ENCODE measurements at regions of chr19 and their contacts with region 1.

Region 1: GRCh38 chr19:50368649-50369570 is 3.5 kb upstream of the NAPSA start:
- DNase-seq: peak; percentile 88
- H3K4me3 ChIP-seq: peak overlapping the region; percentile 24 to 66 (median 52)
- H3K27ac ChIP-seq: peak overlapping the region; percentile 79 to 89 (median 86)
- H3K4me1 ChIP-seq: peaks cover 0 to 4% (median 2%) of the 10 kb centered on the region in 4 donors
- H3K27me3 ChIP-seq: no peaks in the 10 kb centered on the region
- CTCF ChIP-seq: peak; percentile 81 to 96 (median 92)
- EP300 ChIP-seq: no peak
- POLR2A ChIP-seq: no peak

Region 2: GRCh38 chr19:50258918-50259372 is 110.0 kb before region 1 on chr19:
- in situ Hi-C with region 1: no loop called
- intact Hi-C with region 1: no loop called
- DNase-seq: peak; percentile 24
- H3K4me3 ChIP-seq: no peak overlapping the region
- H3K27ac ChIP-seq: no peak overlapping the region
- H3K4me1 ChIP-seq: no peaks in the 10 kb centered on the region
- H3K27me3 ChIP-seq: no peaks in the 10 kb centered on the region
- CTCF ChIP-seq: peak; percentile 17 to 46 (median 40)
- EP300 ChIP-seq: no peak
- POLR2A ChIP-seq: no peak

Region 3: DNA sequence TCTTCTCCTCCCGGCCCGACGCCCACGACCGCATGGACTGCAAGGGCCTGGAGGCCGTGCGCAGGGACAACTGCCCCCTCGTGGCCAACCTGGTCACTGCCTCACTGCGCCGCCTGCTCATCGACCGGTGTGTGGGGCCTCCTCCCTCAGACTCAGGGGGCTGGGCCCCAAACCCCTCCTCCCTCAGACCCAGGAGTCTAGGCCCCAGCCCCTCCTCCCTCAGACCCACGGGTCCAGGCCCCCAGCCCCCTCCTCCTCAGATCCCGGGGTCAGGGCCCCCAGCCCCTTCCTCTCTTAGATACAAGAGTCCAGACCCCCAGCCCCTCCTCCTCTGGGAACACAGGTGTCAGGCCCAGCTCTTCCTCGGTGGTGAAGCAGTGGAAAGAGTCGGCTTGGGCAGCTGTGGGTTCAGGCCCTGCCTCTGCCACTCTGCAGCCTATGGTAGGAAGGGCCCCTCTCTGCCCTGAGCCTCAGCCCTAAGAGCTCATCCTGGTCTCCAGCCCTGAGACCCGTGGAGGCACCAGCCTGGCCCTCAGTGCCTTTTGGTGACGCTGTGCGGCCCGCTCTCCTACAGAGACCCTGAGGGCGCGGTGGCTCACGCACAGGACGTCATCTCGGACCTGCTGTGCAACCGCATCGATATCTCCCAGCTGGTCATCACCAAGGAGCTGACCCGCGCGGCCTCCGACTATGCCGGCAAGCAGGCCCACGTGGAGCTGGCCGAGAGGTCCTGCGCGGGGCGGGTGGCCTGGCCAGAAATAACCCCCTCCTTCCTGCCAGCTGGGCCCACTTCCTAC is 46.2 kb after region 1 on chr19:
- in situ Hi-C with region 1: loop called in 1 of 4 experiments (anchors 10 kb)
- intact Hi-C with region 1: loop called (anchors 2 kb)
- DNase-seq: peak; percentile 83
- H3K4me3 ChIP-seq: no peak overlapping the region
- H3K27ac ChIP-seq: peak overlapping the region in 3 of 4 donors; percentile 17 to 57 (median 48)
- H3K4me1 ChIP-seq: peaks cover 3 to 51% (median 26%) of the 10 kb centered on the region in 4 donors
- H3K27me3 ChIP-seq: peaks cover 34% of the 10 kb centered on the region
- CTCF ChIP-seq: peak; percentile 83 to 94 (median 91)
- EP300 ChIP-seq: no peak
- POLR2A ChIP-seq: no peak

Region 4: DNA sequence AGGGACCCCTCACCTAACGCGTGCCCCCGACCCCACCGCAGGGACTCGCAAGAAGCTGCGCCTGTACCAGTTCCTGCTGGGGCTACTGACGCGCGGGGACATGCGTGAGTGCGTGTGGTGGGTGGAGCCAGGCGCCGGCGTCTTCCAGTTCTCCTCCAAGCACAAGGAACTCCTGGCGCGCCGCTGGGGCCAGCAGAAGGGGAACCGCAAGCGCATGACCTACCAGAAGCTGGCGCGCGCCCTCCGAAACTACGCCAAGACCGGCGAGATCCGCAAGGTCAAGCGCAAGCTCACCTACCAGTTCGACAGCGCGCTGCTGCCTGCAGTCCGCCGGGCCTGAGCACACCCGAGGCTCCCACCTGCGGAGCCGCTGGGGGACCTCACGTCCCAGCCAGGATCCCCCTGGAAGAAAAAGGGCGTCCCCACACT is 59.1 kb after region 1 on chr19:
- in situ Hi-C with region 1: loop called in 1 of 4 experiments (anchors 10 kb)
- intact Hi-C with region 1: no loop called
- DNase-seq: peak; percentile 81
- H3K4me3 ChIP-seq: peak overlapping the region in 3 of 4 donors; percentile 5 to 33 (median 12)
- H3K27ac ChIP-seq: peak overlapping the region in 3 of 4 donors; percentile 2 to 54 (median 47)
- H3K4me1 ChIP-seq: peaks cover 6 to 31% (median 20%) of the 10 kb centered on the region in 4 donors
- H3K27me3 ChIP-seq: peaks cover 42% of the 10 kb centered on the region
- CTCF ChIP-seq: no peak
- EP300 ChIP-seq: no peak
- POLR2A ChIP-seq: no peak

Region 5: DNA sequence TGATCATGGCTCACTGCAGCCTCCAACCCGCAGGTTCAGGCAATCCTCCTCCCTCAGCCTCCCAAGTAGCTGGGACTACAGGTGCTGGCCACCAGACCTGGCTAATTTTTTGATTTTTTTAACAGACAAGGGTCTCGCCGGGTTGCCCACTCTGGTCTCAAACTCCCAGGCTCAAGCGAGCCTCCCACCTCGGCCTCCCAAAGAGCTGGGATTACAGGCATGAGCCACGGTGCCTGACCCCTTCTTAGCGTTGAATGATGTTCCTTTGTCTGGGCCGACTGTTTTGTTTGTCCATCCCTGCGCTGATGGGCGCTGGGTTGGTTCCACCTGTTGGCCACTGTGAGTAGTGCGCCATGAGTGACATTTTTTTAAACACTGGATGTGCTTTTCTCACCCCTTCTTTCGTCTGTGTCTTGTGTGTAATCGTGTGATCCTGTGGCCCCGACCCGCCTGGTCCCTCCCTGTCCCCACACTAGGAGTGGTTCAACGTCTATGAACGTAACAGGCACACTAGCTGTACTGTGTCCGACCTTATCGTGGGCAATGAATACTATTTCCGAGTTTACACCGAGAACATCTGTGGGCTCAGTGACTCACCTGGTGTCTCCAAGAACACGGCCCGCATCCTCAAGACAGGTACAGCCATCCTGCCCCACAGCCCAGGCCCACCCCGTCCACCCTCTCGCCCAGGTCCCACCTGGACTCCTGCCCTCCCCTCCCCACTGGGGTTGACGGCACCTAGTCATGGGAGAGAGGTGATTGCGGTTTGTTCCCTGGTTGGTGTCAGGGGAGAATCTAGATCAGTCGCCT is 92.4 kb after region 1 on chr19:
- in situ Hi-C with region 1: loop called (anchors 5 to 25 kb)
- intact Hi-C with region 1: loop called (anchors 1 kb)
- DNase-seq: peak; percentile 73
- H3K4me3 ChIP-seq: no peak overlapping the region
- H3K27ac ChIP-seq: no peak overlapping the region
- H3K4me1 ChIP-seq: peaks cover 0 to under 1% (median 0%) of the 10 kb centered on the region in 4 donors
- H3K27me3 ChIP-seq: peaks cover 25% of the 10 kb centered on the region
- CTCF ChIP-seq: peak; percentile 77 to 92 (median 87)
- EP300 ChIP-seq: no peak
- POLR2A ChIP-seq: no peak

Region 6: DNA sequence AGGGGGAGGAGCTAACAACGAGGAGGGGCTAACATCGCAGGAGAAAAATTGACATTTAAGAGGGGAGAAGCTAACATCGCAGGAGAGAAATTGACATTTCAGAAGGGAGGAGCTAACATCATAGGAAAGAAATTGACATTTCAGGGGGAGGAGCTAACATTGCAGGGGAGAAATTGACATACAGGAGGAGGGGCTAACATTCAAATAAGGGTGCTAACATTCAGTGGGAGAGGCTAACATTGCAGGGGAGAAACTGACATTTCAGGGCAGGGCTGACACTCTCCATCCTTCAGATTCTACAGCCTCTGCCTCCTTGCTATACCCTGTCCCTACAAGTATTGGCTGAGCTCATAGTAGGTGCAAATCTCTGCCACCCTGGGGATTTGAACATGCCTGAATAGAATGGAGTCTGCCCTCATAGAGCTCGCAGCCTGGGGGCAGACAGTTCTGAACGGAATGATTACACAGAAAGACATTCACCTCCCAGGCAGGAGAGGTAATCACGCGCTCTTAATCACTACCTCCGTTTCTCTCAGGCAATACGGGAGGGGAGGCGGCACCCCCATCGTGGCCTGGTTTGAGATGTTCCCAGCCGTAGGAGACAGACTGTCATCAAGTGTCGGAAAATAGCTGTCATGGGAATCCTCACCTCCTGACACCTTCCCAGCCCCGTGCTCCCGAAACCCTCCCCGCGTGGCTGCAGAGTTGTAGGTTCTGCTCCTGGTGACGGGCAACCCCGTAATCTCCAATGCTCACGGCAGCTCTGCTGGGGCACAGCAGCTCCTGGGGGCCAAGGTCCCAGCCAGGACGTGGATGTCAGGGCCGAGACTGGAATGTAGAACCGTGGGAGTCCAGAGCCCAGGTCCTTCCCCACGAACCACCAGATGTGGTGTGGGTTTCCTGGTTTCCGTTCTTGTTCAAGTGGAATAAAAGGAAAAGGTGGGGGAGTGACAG is 410.9 kb after region 1 on chr19:
- in situ Hi-C with region 1: no loop called
- intact Hi-C with region 1: loop called (anchors 5 kb)
- DNase-seq: no peak
- H3K4me3 ChIP-seq: no peak overlapping the region
- H3K27ac ChIP-seq: no peak overlapping the region
- H3K4me1 ChIP-seq: peaks cover 0 to 6% (median 2%) of the 10 kb centered on the region in 4 donors
- H3K27me3 ChIP-seq: peaks cover 85% of the 10 kb centered on the region
- CTCF ChIP-seq: no peak
- EP300 ChIP-seq: no peak
- POLR2A ChIP-seq: no peak